ENCODE measurements at regions of chr12 and their contacts with region 1.

Region 1: GRCh38 chr12:124680863-124681778 is 113.7 kb upstream of the NCOR2 start:
- DNase-seq: no peak
- H3K4me3 ChIP-seq: no peak overlapping the region
- H3K27ac ChIP-seq: peak overlapping the region; percentile 78 to 90 (median 84)
- H3K4me1 ChIP-seq: peaks cover 52 to 95% (median 61%) of the 10 kb centered on the region in 3 donors
- H3K27me3 ChIP-seq: no peaks in the 10 kb centered on the region
- CTCF ChIP-seq: peak in 3 of 6 experiments; percentile 7 to 38 (median 37)
- POLR2A ChIP-seq: no peak

Region 2: GRCh38 chr12:124428130-124428791 is 252.9 kb before region 1 on chr12:
- intact Hi-C with region 1: no loop called
- DNase-seq: no peak
- H3K4me3 ChIP-seq: no peak overlapping the region
- H3K27ac ChIP-seq: peak overlapping the region in 3 of 4 donors; percentile 56 to 79 (median 68)
- H3K4me1 ChIP-seq: peaks cover 15 to 59% (median 26%) of the 10 kb centered on the region in 3 donors
- H3K27me3 ChIP-seq: no peaks in the 10 kb centered on the region
- CTCF ChIP-seq: no peak
- POLR2A ChIP-seq: no peak

Region 3: DNA sequence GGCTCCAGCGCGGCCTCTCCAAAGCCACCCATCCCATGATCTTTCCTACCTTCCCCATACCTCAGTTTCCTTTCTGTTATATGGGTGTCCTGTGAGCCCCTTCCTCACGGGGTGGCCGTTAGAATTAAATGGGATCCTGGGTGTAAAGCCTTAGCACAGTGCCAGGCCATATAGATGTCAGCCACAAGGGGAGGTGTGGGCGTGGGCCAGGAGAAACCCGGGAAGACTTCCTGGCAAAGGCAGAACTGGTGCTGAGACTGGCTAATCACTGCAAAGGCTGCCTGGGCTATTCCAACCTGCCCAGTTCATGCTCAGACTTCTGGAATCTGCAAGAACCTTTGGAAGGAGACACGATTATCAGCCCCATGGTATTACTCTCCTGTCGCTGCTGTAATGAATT is 102.7 kb before region 1 on chr12:
- intact Hi-C with region 1: loop called (anchors 10 kb)
- DNase-seq: no peak
- H3K4me3 ChIP-seq: no peak overlapping the region
- H3K27ac ChIP-seq: no peak overlapping the region
- H3K4me1 ChIP-seq: peaks cover 5 to 33% (median 8%) of the 10 kb centered on the region in 3 donors
- H3K27me3 ChIP-seq: no peaks in the 10 kb centered on the region
- CTCF ChIP-seq: peak in 1 of 6 experiments; percentile 52
- POLR2A ChIP-seq: no peak